Gastrocnemius medialis (tissue), 4 donors: ENCODE measurements at regions of chr14 and their contacts with region 1.

Region 1: GRCh38 chr14:60311417-60311816 is 62.4 kb downstream of the PPM1A start:
- DNase-seq: no peak
- ATAC-seq: no peak
- H3K4me3 ChIP-seq: no peak overlapping the region
- H3K27ac ChIP-seq: no peak overlapping the region
- H3K4me1 ChIP-seq: no peaks in the 10 kb centered on the region
- H3K27me3 ChIP-seq: no peaks in the 10 kb centered on the region
- CTCF ChIP-seq: no peak
- POLR2A ChIP-seq: no peak

Region 2: DNA sequence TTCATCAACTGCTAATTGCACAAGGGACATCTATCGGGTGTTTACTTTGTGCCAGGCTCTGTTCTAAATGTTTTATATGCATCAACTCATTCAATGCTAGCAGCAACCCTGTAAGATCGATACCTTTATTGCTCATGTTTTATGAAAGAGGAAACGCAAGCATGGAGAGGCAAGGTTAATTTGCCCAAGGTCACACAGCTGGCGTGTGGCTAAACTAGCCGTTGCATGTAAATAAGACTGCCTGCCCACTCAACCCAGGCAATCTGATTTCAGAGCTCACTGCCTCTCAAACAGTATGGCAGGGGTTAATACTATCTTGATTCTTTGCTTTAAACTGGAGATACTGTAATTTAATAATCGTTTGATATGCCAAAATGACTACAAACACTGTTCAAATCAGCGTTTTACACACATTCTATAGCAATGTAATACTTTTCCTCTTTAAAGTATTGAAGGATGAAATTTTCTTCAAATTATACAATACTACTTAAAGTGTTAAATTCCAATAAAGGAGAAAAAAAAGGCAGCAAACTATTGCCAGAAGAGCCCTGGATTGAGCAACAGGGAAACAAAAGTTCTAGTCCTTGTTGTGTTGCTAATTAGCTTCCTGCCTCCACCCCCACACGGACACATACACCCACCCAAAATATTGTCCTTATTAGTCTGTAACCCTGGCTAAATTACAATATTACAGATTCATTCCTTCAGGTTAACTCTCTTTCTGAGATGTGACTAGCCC is 107.1 kb before region 1 on chr14:
- in situ Hi-C with region 1: loop called in 1 of 4 experiments (anchors 25 kb)
- intact Hi-C with region 1: no loop called
- DNase-seq: no peak
- ATAC-seq: peak in 1 of 2 donors; percentile 59
- H3K4me3 ChIP-seq: peak overlapping the region in 1 of 4 donors; percentile 12
- H3K27ac ChIP-seq: peak overlapping the region; percentile 6 to 51 (median 18)
- H3K4me1 ChIP-seq: peaks cover 11 to 15% of the 10 kb centered on the region in 2 donors
- H3K27me3 ChIP-seq: no peaks in the 10 kb centered on the region
- CTCF ChIP-seq: no peak
- POLR2A ChIP-seq: no peak